Activated CD4-positive, alpha-beta T cell treated with anti-CD3 and anti-CD28 coated beads for 36 hours (primary cell): ENCODE measurements at regions of chr22 and their contacts with region 1.

Region 1: DNA sequence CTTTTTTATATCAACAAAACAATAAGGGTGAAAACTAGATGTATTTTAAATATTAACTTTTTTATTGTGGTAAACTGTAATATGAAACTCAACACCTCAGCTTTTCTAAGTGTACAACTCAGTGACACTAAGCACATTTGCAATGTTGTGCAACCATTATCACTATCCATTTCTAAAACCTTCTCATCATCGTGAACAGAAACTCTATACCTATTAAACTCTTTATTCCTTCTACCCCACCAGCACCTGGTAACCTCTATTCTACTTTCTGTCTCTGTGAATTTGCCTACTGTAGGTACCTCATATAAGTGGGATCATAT is 9.4 kb downstream of the HORMAD2 start:
- DNase-seq: no peak
- ATAC-seq: no peak
- H3K4me3 Mint-ChIP-seq: no peak overlapping the region
- H3K27ac Mint-ChIP-seq: no peak overlapping the region
- H3K4me1 Mint-ChIP-seq: peaks cover 7% of the 10 kb centered on the region
- H3K27me3 Mint-ChIP-seq: peaks cover 4% of the 10 kb centered on the region

Region 2: GRCh38 chr22:29587938-29588699 is 501.5 kb before region 1 on chr22:
- CTCF ChIA-PET with region 1: interaction called, 3 read pairs
- POLR2A ChIA-PET with region 1: no interaction called
- intact Hi-C with region 1: loop called in 1 of 2 experiments (anchors 2 kb)
- DNase-seq: no peak
- ATAC-seq: no peak
- H3K4me3 Mint-ChIP-seq: no peak overlapping the region
- H3K27ac Mint-ChIP-seq: no peak overlapping the region
- H3K4me1 Mint-ChIP-seq: peaks cover 8% of the 10 kb centered on the region
- H3K27me3 Mint-ChIP-seq: no peaks in the 10 kb centered on the region

Region 3: DNA sequence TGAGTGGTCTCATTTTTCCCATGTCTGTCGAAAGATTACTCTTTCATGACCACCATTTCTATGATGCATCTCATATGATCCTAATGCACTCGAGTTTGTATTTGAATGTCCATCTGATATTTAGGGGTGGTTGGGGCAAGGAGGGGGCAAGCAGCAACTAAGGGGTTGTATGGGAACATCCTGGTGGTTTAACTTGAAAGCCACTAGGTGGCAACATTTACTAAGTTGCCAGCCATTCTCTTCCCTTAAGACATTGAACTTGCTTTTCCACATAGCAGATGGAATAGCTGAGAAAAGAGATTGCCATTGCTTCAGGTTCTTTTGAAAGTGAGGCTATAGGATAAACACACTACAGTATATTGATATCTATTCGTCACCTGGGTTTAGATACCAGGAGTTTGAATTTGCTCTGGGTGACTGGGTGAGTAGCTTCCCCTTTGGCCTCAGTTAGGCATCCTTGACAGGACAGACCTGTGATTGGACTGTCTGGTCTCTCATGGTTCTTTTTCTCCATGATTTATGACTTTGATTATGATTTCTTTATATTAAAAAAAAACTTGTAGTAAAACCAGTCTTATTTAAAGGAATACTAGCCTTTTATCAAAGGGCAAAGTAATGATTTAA is 453.8 kb before region 1 on chr22:
- CTCF ChIA-PET with region 1: interaction called, 6 read pairs
- POLR2A ChIA-PET with region 1: no interaction called
- intact Hi-C with region 1: loop called in 1 of 2 experiments (anchors 1 kb)
- DNase-seq: no peak
- ATAC-seq: no peak
- H3K4me3 Mint-ChIP-seq: no peak overlapping the region
- H3K27ac Mint-ChIP-seq: no peak overlapping the region
- H3K4me1 Mint-ChIP-seq: peaks cover 18% of the 10 kb centered on the region
- H3K27me3 Mint-ChIP-seq: no peaks in the 10 kb centered on the region

Region 4: GRCh38 chr22:29689880-29690213 is 399.8 kb before region 1 on chr22:
- CTCF ChIA-PET with region 1: interaction called, 11 read pairs
- POLR2A ChIA-PET with region 1: no interaction called
- intact Hi-C with region 1: loop called in 1 of 2 experiments (anchors 2 kb)
- DNase-seq: peak; percentile 69
- ATAC-seq: peak; percentile 51
- H3K4me3 Mint-ChIP-seq: no peak overlapping the region
- H3K27ac Mint-ChIP-seq: no peak overlapping the region
- H3K4me1 Mint-ChIP-seq: no peaks in the 10 kb centered on the region
- H3K27me3 Mint-ChIP-seq: no peaks in the 10 kb centered on the region

Region 5: DNA sequence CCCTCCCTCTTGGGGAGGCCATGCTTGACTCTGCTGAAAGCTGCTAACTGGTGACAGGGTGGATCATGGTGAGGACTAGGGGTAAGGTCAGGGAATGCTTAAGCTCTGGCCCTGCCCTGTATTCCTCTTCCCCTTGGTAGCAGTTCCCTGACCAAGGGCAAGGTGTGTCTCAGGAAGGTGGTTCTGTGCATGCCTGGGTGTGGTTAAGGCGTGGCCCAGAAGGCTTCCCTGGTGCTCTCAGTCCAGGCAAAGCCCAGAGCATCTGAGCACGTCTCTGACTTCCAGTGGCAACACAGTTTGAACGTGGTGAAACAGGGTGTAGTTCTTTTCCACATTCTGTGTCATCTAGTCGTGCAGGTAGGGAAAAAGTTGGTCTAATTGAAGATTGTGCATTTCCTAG is 62.4 kb before region 1 on chr22:
- CTCF ChIA-PET with region 1: interaction called, 11 read pairs
- POLR2A ChIA-PET with region 1: no interaction called
- intact Hi-C with region 1: no loop called
- DNase-seq: no peak
- ATAC-seq: no peak
- H3K4me3 Mint-ChIP-seq: no peak overlapping the region
- H3K27ac Mint-ChIP-seq: no peak overlapping the region
- H3K4me1 Mint-ChIP-seq: peaks cover 10% of the 10 kb centered on the region
- H3K27me3 Mint-ChIP-seq: no peaks in the 10 kb centered on the region